WTC11 (cell line): ENCODE measurements at regions of chr1 and their contacts with region 1.

Region 1: GRCh38 chr1:154335025-154335714 is 9.8 kb downstream of the ATP8B2 start:
- DNase-seq: peak; percentile 86
- ATAC-seq: peak; percentile 95
- H3K4me3 Mint-ChIP-seq: no peak overlapping the region
- H3K27ac Mint-ChIP-seq: 0 out of 2 replicates have a peak overlapping the region, but pooled peaks have one; percentile 85
- H3K4me1 Mint-ChIP-seq: no peaks in the 10 kb centered on the region
- H3K27me3 Mint-ChIP-seq: no peaks in the 10 kb centered on the region
- CTCF ChIP-seq: peak; percentile 88

Region 2: DNA sequence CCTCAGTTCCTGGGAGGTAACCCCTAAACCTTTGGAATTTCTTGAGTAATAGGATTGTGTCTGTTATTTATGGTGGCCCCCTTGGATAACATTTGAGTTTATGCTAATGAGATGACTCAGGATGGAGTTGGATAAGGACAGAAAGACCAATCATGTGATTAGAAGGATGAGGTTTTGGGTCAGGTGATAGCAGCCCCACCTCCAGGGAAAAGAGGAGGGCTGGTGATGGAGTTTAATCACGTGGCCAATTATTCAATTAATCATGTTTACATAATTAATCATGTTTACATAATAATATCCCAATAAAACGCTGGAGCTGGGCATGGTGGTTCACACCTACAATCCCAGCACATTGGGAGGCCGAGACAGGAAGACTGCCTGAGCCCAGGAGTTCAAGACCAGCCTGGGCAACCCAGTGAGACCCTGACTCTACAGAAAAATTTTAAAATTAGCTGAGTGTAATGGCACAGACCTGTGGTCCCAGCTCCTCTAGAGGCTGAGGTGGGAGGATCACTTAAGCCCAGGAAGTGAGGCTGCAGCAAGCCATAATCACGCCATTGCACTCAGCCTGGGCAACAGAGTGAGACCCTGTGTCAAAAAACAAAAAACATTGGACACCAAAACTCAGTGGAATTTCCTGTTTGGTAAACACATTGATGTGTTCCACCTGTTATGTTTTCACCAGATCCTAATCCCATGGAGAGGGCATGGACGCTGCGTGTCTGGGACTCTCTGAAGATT is 253.6 kb before region 1 on chr1:
- CTCF ChIA-PET with region 1: no interaction called
- POLR2A ChIA-PET with region 1: no interaction called
- DNase-seq: no peak
- ATAC-seq: no peak
- H3K4me3 Mint-ChIP-seq: no peak overlapping the region
- H3K27ac Mint-ChIP-seq: no peak overlapping the region
- H3K4me1 Mint-ChIP-seq: no peaks in the 10 kb centered on the region
- H3K27me3 Mint-ChIP-seq: no peaks in the 10 kb centered on the region; the same call in 1 of the 2 replicates
- CTCF ChIP-seq: no peak

Region 3: GRCh38 chr1:154193821-154194220 is 141.3 kb before region 1 on chr1:
- CTCF ChIA-PET with region 1: interaction called, 17 read pairs
- POLR2A ChIA-PET with region 1: no interaction called
- DNase-seq: no peak
- ATAC-seq: no peak
- H3K4me3 Mint-ChIP-seq: no peak overlapping the region
- H3K27ac Mint-ChIP-seq: no peak overlapping the region
- H3K4me1 Mint-ChIP-seq: peaks cover 10% of the 10 kb centered on the region
- H3K27me3 Mint-ChIP-seq: peaks cover 9% of the 10 kb centered on the region; the same call in 1 of the 2 replicates
- CTCF ChIP-seq: no peak

Region 4: DNA sequence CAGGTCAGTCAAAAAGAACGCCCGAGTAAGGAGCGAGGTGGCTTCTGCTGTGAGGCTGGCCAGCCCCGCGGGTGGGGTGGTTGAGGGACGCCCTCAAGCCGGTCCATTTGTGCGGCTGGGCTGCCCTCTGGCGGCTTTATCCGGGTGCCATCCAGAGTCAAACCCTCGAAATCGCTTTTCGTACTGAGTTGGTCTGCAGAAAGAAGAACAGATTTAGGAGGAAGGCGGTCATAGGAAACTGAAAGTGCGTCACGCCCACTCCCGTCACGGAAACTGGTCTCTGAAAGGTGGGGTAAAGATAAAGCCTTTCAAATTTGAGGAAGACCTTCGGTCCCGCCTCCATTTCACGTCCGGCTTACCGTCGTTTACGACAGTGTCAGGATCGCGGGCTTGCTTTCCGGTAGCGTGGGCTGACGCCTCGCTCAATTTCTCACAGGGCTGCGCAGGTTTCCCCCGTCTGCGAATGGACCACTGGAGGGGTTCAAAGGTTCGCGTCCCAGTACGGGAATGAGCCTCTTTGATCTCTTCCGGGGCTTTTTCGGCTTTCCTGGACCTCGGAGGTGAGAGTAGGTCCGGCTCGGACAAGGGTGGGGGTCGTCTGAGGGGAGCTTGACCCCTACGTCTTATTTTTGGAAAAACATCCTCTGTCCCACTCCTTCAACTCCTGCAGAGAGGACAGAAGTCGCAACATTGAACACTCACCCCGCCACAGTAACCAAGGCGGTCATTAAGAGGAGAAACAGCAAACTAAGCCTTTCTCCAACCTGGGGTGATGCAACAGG is 62.8 kb before region 1 on chr1 and contains the start of gene HAX1:
- CTCF ChIA-PET with region 1: interaction called, 35 read pairs
- POLR2A ChIA-PET with region 1: no interaction called
- DNase-seq: peak; percentile 89
- ATAC-seq: peak; percentile 90
- H3K4me3 Mint-ChIP-seq: peak within 1 kb of the TSS; percentile 94
- H3K27ac Mint-ChIP-seq: peak within 1 kb of the TSS; percentile 94
- H3K4me1 Mint-ChIP-seq: peaks cover 14% of the 10 kb centered on the region
- H3K27me3 Mint-ChIP-seq: no peaks in the 10 kb centered on the region
- CTCF ChIP-seq: peak; percentile 41; the same call in 1 of the 2 replicates
- total RNA-seq, gene HAX1: 63.4 to 69.2 TPM (median 65.8 TPM) in 3 replicates

Region 5: DNA sequence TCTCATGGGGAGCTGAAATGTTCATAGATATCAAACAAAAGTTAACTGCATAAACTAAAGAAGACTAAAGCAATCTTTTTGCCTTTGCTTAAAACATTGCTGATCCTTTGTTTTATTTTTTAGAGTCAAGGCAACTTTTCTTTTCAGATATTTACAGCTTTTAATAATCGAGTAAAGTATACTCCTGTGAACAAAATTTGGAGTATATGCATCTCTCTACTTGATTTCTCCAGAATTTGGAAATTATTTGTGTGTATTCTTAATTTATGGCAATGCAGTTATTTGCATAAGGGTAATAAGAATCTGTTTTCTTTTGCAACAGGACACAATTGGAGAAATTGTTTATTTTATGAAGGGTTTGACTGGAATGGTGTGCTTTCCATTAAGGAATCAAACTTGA is 18.5 kb before region 1 on chr1:
- CTCF ChIA-PET with region 1: interaction called, 168 read pairs
- POLR2A ChIA-PET with region 1: interaction called, 3 read pairs
- DNase-seq: no peak
- ATAC-seq: no peak
- H3K4me3 Mint-ChIP-seq: no peak overlapping the region
- H3K27ac Mint-ChIP-seq: no peak overlapping the region
- H3K4me1 Mint-ChIP-seq: no peaks in the 10 kb centered on the region
- H3K27me3 Mint-ChIP-seq: peaks cover 12% of the 10 kb centered on the region
- CTCF ChIP-seq: no peak

Region 6: DNA sequence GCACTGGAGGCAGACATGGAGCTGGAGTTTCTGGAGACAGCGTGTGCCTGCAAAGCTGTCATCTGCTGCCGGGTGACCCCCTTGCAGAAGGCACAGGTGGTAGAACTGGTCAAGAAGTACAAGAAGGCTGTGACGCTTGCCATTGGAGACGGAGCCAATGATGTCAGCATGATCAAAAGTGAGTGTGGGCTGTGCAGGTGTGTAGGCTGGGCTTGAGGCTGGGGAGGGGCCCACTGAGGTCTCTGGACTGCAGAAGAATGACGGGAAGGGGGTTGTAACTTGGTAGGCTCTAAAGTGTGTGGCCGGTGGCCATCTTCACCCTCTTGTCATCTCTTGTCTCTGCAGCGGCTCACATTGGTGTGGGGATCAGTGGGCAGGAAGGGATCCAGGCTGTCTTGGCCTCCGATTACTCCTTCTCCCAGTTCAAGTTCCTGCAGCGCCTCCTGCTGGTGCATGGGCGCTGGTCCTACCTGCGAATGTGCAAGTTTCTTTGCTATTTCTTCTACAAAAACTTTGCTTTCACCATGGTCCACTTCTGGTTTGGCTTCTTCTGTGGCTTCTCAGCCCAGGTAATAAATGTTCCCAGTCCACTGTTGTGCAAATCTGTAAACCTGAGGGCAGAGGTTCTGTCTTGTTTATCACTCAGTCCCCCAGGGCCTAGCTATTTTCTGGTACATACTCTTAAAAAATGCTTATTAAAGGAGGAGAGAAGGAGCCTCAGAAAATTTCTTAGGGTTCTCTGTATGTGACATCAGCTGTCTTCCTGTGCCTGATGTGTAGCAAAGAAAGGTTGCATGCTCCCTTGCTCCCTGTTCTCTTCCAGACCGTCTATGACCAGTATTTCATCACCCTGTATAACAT is 10.0 kb after region 1 on chr1:
- CTCF ChIA-PET with region 1: interaction called, 29 read pairs
- POLR2A ChIA-PET with region 1: no interaction called
- DNase-seq: peak; percentile 83
- ATAC-seq: peak; percentile 88
- H3K4me3 Mint-ChIP-seq: no peak overlapping the region
- H3K27ac Mint-ChIP-seq: no peak overlapping the region
- H3K4me1 Mint-ChIP-seq: peaks cover 3% of the 10 kb centered on the region; the same call in 1 of the 2 replicates
- H3K27me3 Mint-ChIP-seq: no peaks in the 10 kb centered on the region
- CTCF ChIP-seq: peak; percentile 89

Region 7: DNA sequence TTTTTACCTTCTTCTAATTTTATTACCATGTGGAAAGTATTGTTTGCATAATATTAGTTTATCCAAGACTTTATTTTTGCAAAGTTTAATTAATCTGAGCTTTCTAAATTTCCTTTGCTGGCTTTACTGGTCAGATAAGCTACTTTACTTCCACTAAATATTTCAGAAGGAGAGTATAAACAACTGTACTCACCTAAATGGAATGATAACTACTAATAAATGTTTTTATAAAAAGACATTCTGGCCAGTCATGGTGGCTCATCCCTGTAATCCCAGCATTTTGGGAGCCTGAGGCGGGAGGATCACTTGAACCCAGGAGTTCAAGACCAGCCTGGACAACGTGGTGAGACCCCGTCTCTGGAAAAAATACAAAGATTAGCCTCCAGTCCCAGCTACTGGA is 26.2 kb after region 1 on chr1:
- CTCF ChIA-PET with region 1: interaction called, 14 read pairs
- POLR2A ChIA-PET with region 1: no interaction called
- DNase-seq: no peak
- ATAC-seq: no peak
- H3K4me3 Mint-ChIP-seq: no peak overlapping the region
- H3K27ac Mint-ChIP-seq: no peak overlapping the region
- H3K4me1 Mint-ChIP-seq: peaks cover 9% of the 10 kb centered on the region
- H3K27me3 Mint-ChIP-seq: no peaks in the 10 kb centered on the region; the same call in 1 of the 2 replicates
- CTCF ChIP-seq: no peak

Region 8: DNA sequence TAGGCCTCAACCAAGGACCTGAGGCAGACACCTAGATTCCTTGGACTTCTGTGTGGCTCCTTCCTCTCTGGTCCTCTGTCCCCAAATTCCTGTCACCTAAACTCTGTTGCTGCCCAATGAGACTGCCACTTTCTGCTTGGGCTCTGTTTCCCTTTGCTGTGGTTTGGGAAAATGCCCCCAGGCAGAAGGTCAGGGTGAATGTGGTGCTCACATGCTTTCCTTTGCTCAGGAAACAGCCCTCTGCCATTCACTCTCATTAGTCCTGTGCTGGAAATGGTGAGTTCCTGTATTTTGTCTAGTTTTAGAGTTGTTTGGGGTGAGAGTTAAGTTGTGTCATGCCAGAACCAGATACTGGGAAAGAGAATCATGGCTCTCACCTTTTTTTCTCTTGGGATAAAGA is 189.7 kb after region 1 on chr1:
- CTCF ChIA-PET with region 1: no interaction called
- POLR2A ChIA-PET with region 1: no interaction called
- DNase-seq: no peak
- ATAC-seq: no peak
- H3K4me3 Mint-ChIP-seq: no peak overlapping the region
- H3K27ac Mint-ChIP-seq: no peak overlapping the region
- H3K4me1 Mint-ChIP-seq: no peaks in the 10 kb centered on the region
- H3K27me3 Mint-ChIP-seq: no peaks in the 10 kb centered on the region
- CTCF ChIP-seq: no peak

Region 9: GRCh38 chr1:154607609-154608396 is 272.6 kb after region 1 on chr1 and contains the start of gene ADAR:
- CTCF ChIA-PET with region 1: no interaction called
- POLR2A ChIA-PET with region 1: no interaction called
- DNase-seq: peak; percentile 67
- ATAC-seq: peak; percentile 7
- H3K4me3 Mint-ChIP-seq: peak within 1 kb of the TSS; percentile 93
- H3K27ac Mint-ChIP-seq: peak within 1 kb of the TSS; percentile 99
- H3K4me1 Mint-ChIP-seq: peaks cover 76% of the 10 kb centered on the region
- H3K27me3 Mint-ChIP-seq: no peaks in the 10 kb centered on the region; the same call in 1 of the 2 replicates
- CTCF ChIP-seq: no peak
- total RNA-seq, gene ADAR: 208 to 221 TPM (median 215 TPM) in 3 replicates